ENCODE measurements at regions of chr1 and their contacts with region 1.

Region 1: GRCh38 chr1:155323798-155324610 is 3.3 kb downstream of the RUSC1 start:
- DNase-seq: peak; percentile 84
- ATAC-seq: peak; percentile 87
- H3K4me3 ChIP-seq: peak overlapping the region; percentile 88
- H3K27ac ChIP-seq: peak overlapping the region; percentile 66
- H3K4me1 ChIP-seq: peaks cover 7% of the 10 kb centered on the region
- H3K27me3 ChIP-seq: no peaks in the 10 kb centered on the region
- CTCF ChIP-seq: 0 out of 6 replicates have a peak, but pooled peaks of 1 of the 3 experiments have one; percentile 3
- EP300 ChIP-seq: 0 out of 4 replicates have a peak, but pooled peaks of 1 of the 2 experiments have one; percentile 15
- POLR2A ChIP-seq: peak; percentile 74
- RAD21 ChIP-seq: no peak

Region 2: DNA sequence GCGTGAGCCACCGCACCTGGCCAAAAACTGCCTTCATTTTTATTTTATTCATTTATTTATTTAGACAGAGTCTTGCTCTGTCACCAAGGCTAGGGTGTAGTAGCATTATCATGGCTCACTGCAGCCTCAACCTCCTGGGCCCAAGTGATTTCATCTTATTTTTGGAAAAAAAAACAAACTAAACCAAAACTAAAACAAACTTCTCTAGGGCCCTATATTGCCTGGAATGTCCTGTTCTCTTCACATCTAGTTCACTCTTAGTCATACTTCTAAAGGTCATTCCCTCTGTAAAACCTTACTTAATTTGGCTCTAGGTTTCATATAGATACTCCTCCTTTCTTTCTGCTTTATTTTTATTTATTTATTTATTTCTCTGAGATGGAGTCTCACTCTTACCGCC is 1317.9 kb before region 1 on chr1:
- CTCF ChIA-PET with region 1: no interaction called
- POLR2A ChIA-PET with region 1: no interaction called
- RAD21 ChIA-PET with region 1: no interaction called
- SMC1A ChIA-PET with region 1: no interaction called
- in situ Hi-C with region 1: no loop called
- intact Hi-C with region 1: no loop called
- DNase-seq: no peak
- ATAC-seq: no peak
- H3K4me3 ChIP-seq: no peak overlapping the region
- H3K27ac ChIP-seq: no peak overlapping the region
- H3K4me1 ChIP-seq: no peaks in the 10 kb centered on the region
- H3K27me3 ChIP-seq: no peaks in the 10 kb centered on the region
- CTCF ChIP-seq: no peak
- EP300 ChIP-seq: no peak
- POLR2A ChIP-seq: no peak
- RAD21 ChIP-seq: no peak

Region 3: GRCh38 chr1:155193275-155193990 is 130.6 kb before region 1 on chr1:
- CTCF ChIA-PET with region 1: interaction called, 15 read pairs
- POLR2A ChIA-PET with region 1: interaction called, 3 read pairs
- RAD21 ChIA-PET with region 1: interaction called, 3 read pairs
- SMC1A ChIA-PET with region 1: no interaction called
- in situ Hi-C with region 1: no loop called
- intact Hi-C with region 1: no loop called
- DNase-seq: no peak
- ATAC-seq: peak; percentile 93
- H3K4me3 ChIP-seq: peak overlapping the region; percentile 77
- H3K27ac ChIP-seq: peak overlapping the region; percentile 22
- H3K4me1 ChIP-seq: peaks cover 16% of the 10 kb centered on the region
- H3K27me3 ChIP-seq: no peaks in the 10 kb centered on the region
- CTCF ChIP-seq: peak; percentile 96 to 99 (median 99)
- EP300 ChIP-seq: no peak
- POLR2A ChIP-seq: peak; percentile 47; the same call in 1 of the 2 replicates
- RAD21 ChIP-seq: peak; percentile 68

Region 4: GRCh38 chr1:155244368-155245162 is 79.4 kb before region 1 on chr1:
- CTCF ChIA-PET with region 1: interaction called, 225 read pairs
- POLR2A ChIA-PET with region 1: interaction called, 6 read pairs
- RAD21 ChIA-PET with region 1: interaction called, 81 read pairs
- SMC1A ChIA-PET with region 1: interaction called, 57 read pairs
- in situ Hi-C with region 1: no loop called
- intact Hi-C with region 1: no loop called
- DNase-seq: peak; percentile 93
- ATAC-seq: peak; percentile 97
- H3K4me3 ChIP-seq: peak overlapping the region; percentile 74
- H3K27ac ChIP-seq: peak overlapping the region; percentile 79
- H3K4me1 ChIP-seq: peaks cover 14% of the 10 kb centered on the region
- H3K27me3 ChIP-seq: no peaks in the 10 kb centered on the region
- CTCF ChIP-seq: peak; percentile 12 to 31 (median 17); a peak in 3 of 6 replicates
- EP300 ChIP-seq: peak; percentile 40 to 48; a peak in 2 of 4 replicates
- POLR2A ChIP-seq: peak; percentile 96
- RAD21 ChIP-seq: 0 out of 2 replicates have a peak, but pooled peaks have one; percentile 28

Region 5: GRCh38 chr1:155277070-155277895 is 46.7 kb before region 1 on chr1 and contains the start of gene HCN3:
- CTCF ChIA-PET with region 1: interaction called, 21 read pairs
- POLR2A ChIA-PET with region 1: interaction called, 28 read pairs
- RAD21 ChIA-PET with region 1: interaction called, 13 read pairs
- SMC1A ChIA-PET with region 1: interaction called, 12 read pairs
- in situ Hi-C with region 1: no loop called
- intact Hi-C with region 1: loop called (anchors 1 kb)
- DNase-seq: peak; percentile 79
- ATAC-seq: peak; percentile 78
- H3K4me3 ChIP-seq: peak within 1 kb of the TSS; percentile 82
- H3K27ac ChIP-seq: no peak within 1 kb of the TSS
- H3K4me1 ChIP-seq: peaks cover 13% of the 10 kb centered on the region
- H3K27me3 ChIP-seq: no peaks in the 10 kb centered on the region
- CTCF ChIP-seq: peak; percentile 46 to 72 (median 54); a peak in 5 of 6 replicates
- EP300 ChIP-seq: no peak
- POLR2A ChIP-seq: no peak
- RAD21 ChIP-seq: peak; percentile 24; the same call in 1 of the 2 replicates
- polyA plus RNA-seq, gene HCN3: 0.08 to 0.31 TPM

Region 6: GRCh38 chr1:155352631-155353030 is 28.6 kb after region 1 on chr1:
- CTCF ChIA-PET with region 1: no interaction called
- POLR2A ChIA-PET with region 1: no interaction called
- RAD21 ChIA-PET with region 1: no interaction called
- SMC1A ChIA-PET with region 1: no interaction called
- in situ Hi-C with region 1: no loop called
- intact Hi-C with region 1: no loop called
- DNase-seq: no peak
- ATAC-seq: no peak
- H3K4me3 ChIP-seq: no peak overlapping the region
- H3K27ac ChIP-seq: no peak overlapping the region
- H3K4me1 ChIP-seq: no peaks in the 10 kb centered on the region
- H3K27me3 ChIP-seq: no peaks in the 10 kb centered on the region
- CTCF ChIP-seq: no peak
- EP300 ChIP-seq: no peak
- POLR2A ChIP-seq: no peak
- RAD21 ChIP-seq: no peak

Region 7: GRCh38 chr1:155504207-155504606 is 180.2 kb after region 1 on chr1:
- CTCF ChIA-PET with region 1: interaction called, 13 read pairs
- POLR2A ChIA-PET with region 1: no interaction called
- RAD21 ChIA-PET with region 1: interaction called, 5 read pairs
- SMC1A ChIA-PET with region 1: interaction called, 6 read pairs
- in situ Hi-C with region 1: no loop called
- intact Hi-C with region 1: no loop called
- DNase-seq: no peak
- ATAC-seq: peak; percentile 80
- H3K4me3 ChIP-seq: no peak overlapping the region
- H3K27ac ChIP-seq: peak overlapping the region; percentile 38; the same call in 1 of the 2 replicates
- H3K4me1 ChIP-seq: peaks cover 27% of the 10 kb centered on the region
- H3K27me3 ChIP-seq: no peaks in the 10 kb centered on the region
- CTCF ChIP-seq: peak; percentile 38 to 62 (median 52); a peak in 5 of 6 replicates
- EP300 ChIP-seq: no peak
- POLR2A ChIP-seq: no peak
- RAD21 ChIP-seq: peak; percentile 72

Measured in GM12878 (cell line).